Activated CD8-positive, alpha-beta T cell treated with anti-CD3 and anti-CD28 coated beads, Interleukin-2, amount 10 ng/mL, durations not matched to agents 7 days and 5 days (primary cell): ENCODE measurements at regions of chr2 and their contacts with region 1.

Region 1: GRCh38 chr2:102615622-102616436 is 3.5 kb upstream of the SLC9A2 start:
- DNase-seq: peak; percentile 64
- ATAC-seq: peak; percentile 75
- H3K4me3 Mint-ChIP-seq: no peak overlapping the region
- H3K27ac Mint-ChIP-seq: no peak overlapping the region
- H3K4me1 Mint-ChIP-seq: peaks cover 7% of the 10 kb centered on the region
- H3K27me3 Mint-ChIP-seq: peaks cover 43% of the 10 kb centered on the region

Region 2: DNA sequence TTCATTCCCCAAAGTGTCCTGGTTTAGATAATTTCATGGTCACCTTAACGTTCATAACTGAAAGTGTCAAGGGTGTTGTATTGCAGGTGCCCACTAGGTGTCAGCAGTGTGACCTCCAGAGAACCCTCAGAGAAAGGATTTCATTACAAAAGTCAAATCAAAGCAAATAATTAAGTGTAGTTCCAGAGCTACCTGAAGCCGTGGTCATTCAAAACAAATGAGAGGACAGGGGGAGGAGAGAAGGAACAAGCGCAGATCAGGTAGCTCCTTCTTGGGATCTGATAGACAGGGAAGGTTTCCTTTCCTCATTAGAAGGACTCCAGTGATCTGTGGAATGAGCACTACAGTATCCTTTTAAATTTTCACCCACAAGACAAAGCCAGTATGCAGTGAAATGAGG is 142.8 kb before region 1 on chr2 and contains the start of gene SLC9A4:
- CTCF ChIA-PET with region 1: interaction called, 36 read pairs
- POLR2A ChIA-PET with region 1: no interaction called
- DNase-seq: peak; percentile 73
- ATAC-seq: no peak
- H3K4me3 Mint-ChIP-seq: no peak within 1 kb of the TSS
- H3K27ac Mint-ChIP-seq: no peak within 1 kb of the TSS
- H3K4me1 Mint-ChIP-seq: no peaks in the 10 kb centered on the region
- H3K27me3 Mint-ChIP-seq: peaks cover 35% of the 10 kb centered on the region
- total RNA-seq, gene SLC9A4: 0.08 TPM

Region 3: DNA sequence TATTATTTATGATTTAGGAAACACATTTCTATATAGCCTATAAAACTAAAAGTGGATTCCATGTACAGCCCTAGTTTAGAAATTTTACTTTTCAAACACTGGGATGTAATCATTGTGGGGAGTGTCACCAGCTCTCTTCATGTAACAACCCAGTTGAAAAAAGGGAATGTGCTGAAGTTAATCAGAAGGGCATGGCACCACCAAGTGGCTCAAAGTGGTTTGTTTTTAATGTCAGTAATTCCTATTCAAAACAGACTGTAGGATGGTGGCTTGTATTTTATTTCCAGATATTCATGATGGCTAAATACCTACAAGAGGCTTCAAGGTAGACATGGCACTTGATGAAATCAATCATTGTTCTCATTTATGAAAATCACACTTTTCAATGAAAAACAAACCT is 87.9 kb after region 1 on chr2:
- CTCF ChIA-PET with region 1: interaction called, 11 read pairs
- POLR2A ChIA-PET with region 1: no interaction called
- DNase-seq: no peak
- ATAC-seq: no peak
- H3K4me3 Mint-ChIP-seq: no peak overlapping the region
- H3K27ac Mint-ChIP-seq: no peak overlapping the region
- H3K4me1 Mint-ChIP-seq: no peaks in the 10 kb centered on the region
- H3K27me3 Mint-ChIP-seq: peaks cover 9% of the 10 kb centered on the region